B cell (primary cell): ENCODE measurements at regions of chr3 and their contacts with region 1.

Region 1: DNA sequence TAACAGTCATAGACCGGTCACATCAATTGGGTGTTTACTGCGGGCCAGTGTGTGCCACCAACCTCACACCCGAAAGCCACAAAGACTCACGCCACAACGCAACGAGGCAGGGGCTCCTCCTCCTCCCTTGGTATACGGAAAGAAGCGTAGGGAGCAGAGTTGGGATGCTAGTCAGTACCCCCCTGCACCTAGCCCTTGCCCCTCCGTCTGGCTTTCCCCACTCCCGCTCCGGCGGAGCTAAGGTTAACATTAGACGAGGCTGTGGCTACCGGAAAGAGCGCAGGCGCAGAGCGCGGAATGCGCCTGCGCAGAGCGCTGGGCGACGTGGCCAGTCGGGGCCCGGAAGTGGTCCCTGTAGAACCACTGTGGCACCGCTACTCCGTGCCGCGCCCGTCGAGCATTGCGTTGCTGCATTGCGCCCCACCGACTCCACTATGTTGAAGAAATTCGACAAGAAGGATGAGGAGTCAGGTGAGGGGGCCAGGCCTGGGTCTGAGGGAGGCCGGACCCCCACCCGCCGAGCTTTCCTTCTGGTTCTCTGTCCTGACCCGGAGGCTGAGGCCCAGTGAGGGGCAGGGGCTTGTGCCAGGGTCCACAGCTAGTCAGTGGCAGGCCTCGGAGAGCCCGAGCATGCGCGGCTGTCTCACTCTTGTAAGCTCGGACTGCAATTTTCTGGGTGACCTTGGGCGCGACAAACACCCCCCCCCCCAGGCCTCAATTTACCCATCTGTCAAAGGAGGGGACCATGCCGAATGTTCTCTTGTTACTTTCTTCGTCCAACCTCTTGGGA is at the start of gene COPG1:
- DNase-seq: peak; percentile 92
- ATAC-seq: peak; percentile 85
- H3K4me3 ChIP-seq: peak within 1 kb of the TSS; percentile 88 to 99 (median 95)
- H3K4me3 Mint-ChIP-seq: peak within 1 kb of the TSS; percentile 95
- H3K27ac ChIP-seq: peak within 1 kb of the TSS; percentile 64 to 79
- H3K27ac Mint-ChIP-seq: peak within 1 kb of the TSS; percentile 94
- H3K4me1 ChIP-seq: peaks cover 16 to 29% of the 10 kb centered on the region in 2 donors
- H3K4me1 Mint-ChIP-seq: peaks cover 26% of the 10 kb centered on the region
- H3K27me3 ChIP-seq: no peaks in the 10 kb centered on the region
- H3K27me3 Mint-ChIP-seq: no peaks in the 10 kb centered on the region
- CTCF ChIP-seq: no peak
- total RNA-seq, gene COPG1: 85.9 and 87.6 TPM in 2 replicates

Region 2: GRCh38 chr3:129003578-129004160 is 245.8 kb before region 1 on chr3:
- CTCF ChIA-PET with region 1: interaction called, 10 read pairs
- POLR2A ChIA-PET with region 1: no interaction called
- intact Hi-C with region 1: no loop called
- DNase-seq: peak; percentile 73
- ATAC-seq: peak; percentile 75
- H3K4me3 ChIP-seq: no peak overlapping the region
- H3K4me3 Mint-ChIP-seq: peak overlapping the region; percentile 80
- H3K27ac ChIP-seq: no peak overlapping the region
- H3K27ac Mint-ChIP-seq: no peak overlapping the region
- H3K4me1 ChIP-seq: peaks cover 32% of the 10 kb centered on the region in 2 donors
- H3K4me1 Mint-ChIP-seq: peaks cover 23% of the 10 kb centered on the region
- H3K27me3 ChIP-seq: peaks cover 0 to 63% (median 33%) of the 10 kb centered on the region in 4 experiments
- H3K27me3 Mint-ChIP-seq: peaks cover 57% of the 10 kb centered on the region
- CTCF ChIP-seq: peak; percentile 20

Region 3: GRCh38 chr3:129052675-129053074 is 196.8 kb before region 1 on chr3:
- CTCF ChIA-PET with region 1: interaction called, 294 read pairs
- POLR2A ChIA-PET with region 1: no interaction called
- intact Hi-C with region 1: loop called (anchors 1 kb)
- DNase-seq: no peak
- ATAC-seq: no peak
- H3K4me3 ChIP-seq: no peak overlapping the region
- H3K4me3 Mint-ChIP-seq: no peak overlapping the region
- H3K27ac ChIP-seq: no peak overlapping the region
- H3K27ac Mint-ChIP-seq: no peak overlapping the region
- H3K4me1 ChIP-seq: peaks cover 4 to 7% of the 10 kb centered on the region in 2 donors
- H3K4me1 Mint-ChIP-seq: peaks cover 7% of the 10 kb centered on the region
- H3K27me3 ChIP-seq: peaks cover 0 to 10% (median 2%) of the 10 kb centered on the region in 4 experiments
- H3K27me3 Mint-ChIP-seq: peaks cover 31% of the 10 kb centered on the region
- CTCF ChIP-seq: no peak

Region 4: DNA sequence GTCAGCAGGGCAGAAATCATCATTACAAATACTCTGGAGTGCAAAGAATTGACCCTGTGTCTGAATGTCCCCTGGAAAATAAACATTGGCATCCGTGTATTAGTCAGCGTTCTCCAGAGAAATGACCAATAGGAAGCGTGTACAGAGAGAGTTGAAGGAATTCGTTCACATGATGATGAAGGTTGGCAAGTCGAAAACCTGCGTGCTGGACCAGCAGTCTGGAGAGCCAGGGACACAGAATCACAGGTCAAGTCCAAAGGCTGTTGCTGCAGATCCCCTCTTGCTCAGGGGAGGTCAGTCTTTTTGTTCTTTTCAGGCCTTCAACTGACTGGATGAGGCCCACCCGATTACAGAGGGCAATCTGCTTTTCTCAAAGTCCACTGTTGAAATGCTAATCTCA is 172.2 kb before region 1 on chr3:
- CTCF ChIA-PET with region 1: no interaction called
- POLR2A ChIA-PET with region 1: no interaction called
- intact Hi-C with region 1: no loop called
- DNase-seq: no peak
- ATAC-seq: no peak
- H3K4me3 ChIP-seq: no peak overlapping the region
- H3K4me3 Mint-ChIP-seq: no peak overlapping the region
- H3K27ac ChIP-seq: no peak overlapping the region
- H3K27ac Mint-ChIP-seq: peak overlapping the region; percentile 32
- H3K4me1 ChIP-seq: no peaks in the 10 kb centered on the region
- H3K4me1 Mint-ChIP-seq: no peaks in the 10 kb centered on the region
- H3K27me3 ChIP-seq: no peaks in the 10 kb centered on the region
- H3K27me3 Mint-ChIP-seq: peaks cover 7% of the 10 kb centered on the region
- CTCF ChIP-seq: no peak

Region 5: DNA sequence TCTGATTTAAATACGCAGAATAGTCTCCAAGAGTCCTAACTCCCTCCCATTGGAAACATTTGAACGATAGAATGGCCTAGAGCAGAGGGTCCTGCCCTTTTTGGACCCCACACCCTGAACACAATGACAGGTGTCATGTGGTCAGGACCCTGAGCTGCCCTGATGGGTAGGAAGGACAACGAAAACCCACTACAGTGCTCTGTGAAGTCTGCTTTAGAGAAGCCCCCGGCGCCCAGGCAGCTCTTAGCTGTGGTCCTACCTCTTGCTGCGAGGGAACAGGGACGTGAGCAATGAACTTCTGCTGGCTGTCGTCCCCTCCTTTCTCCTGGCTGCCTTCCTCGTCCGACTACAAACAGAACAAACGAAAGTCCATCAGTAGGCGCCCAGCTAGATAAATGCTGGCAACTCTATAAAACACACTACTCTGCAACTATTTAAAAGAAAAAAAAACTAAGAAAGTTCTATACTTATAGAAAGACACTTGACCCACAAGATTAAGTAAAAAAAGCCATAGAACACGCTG is 119.1 kb before region 1 on chr3:
- CTCF ChIA-PET with region 1: no interaction called
- POLR2A ChIA-PET with region 1: no interaction called
- intact Hi-C with region 1: no loop called
- DNase-seq: no peak
- ATAC-seq: no peak
- H3K4me3 ChIP-seq: no peak overlapping the region
- H3K4me3 Mint-ChIP-seq: no peak overlapping the region
- H3K27ac ChIP-seq: no peak overlapping the region
- H3K27ac Mint-ChIP-seq: no peak overlapping the region
- H3K4me1 ChIP-seq: no peaks in the 10 kb centered on the region
- H3K4me1 Mint-ChIP-seq: no peaks in the 10 kb centered on the region
- H3K27me3 ChIP-seq: no peaks in the 10 kb centered on the region
- H3K27me3 Mint-ChIP-seq: no peaks in the 10 kb centered on the region
- CTCF ChIP-seq: no peak

Region 6: DNA sequence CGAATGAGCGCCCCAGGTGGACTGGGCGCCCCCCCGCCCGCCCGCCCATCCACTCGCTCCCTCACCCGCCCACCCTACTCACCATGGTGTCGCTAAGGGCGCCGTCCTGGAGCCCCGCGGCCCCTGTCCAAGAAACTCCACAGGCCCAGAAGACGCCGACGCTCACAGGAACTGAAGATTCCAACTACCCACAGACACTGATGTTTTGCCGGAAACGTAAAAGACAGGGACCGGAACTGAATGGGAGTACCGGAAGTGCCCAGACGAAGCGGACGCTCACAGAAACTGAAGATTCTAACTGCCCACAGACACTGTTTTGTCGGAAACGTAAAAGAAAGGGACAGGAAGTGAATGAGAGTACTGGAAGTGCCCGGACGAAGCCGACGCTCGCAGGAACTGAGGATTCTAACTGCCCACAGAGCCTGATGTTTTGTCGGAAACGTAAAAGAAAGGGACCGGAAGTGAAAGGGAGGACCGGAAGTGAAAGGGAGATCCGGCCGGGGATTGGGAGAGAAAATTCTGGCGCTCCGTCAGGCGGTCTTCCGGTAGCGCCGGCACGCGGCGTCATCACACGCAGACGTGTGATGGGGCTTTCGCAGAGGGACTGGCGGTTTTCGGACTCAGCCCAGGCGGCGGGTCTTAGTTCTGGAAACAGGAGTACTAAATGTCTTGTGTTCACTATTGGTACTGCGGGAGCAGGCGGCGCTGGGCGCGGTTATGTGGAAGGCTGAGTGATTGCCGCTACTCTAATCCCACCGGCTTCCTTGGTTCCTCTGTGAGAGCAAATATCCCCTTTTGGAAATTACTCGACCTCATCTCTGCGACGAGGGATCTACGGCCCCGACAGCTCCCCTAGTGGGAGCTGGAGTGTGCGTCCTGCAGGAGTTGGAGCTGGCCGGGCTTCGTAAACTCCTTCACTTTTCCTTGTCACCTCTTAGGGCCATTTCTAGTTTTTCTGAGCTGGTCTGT is 88.3 kb before region 1 on chr3 and contains the start of gene ISY1:
- CTCF ChIA-PET with region 1: interaction called, 70 read pairs
- POLR2A ChIA-PET with region 1: interaction called, 4 read pairs
- intact Hi-C with region 1: loop called (anchors 1 kb)
- DNase-seq: peak; percentile 97
- ATAC-seq: peak; percentile 85
- H3K4me3 ChIP-seq: peak within 1 kb of the TSS; percentile 73 to 99 (median 83)
- H3K4me3 Mint-ChIP-seq: peak within 1 kb of the TSS; percentile 100
- H3K27ac ChIP-seq: peak within 1 kb of the TSS; percentile 92 to 99
- H3K27ac Mint-ChIP-seq: peak within 1 kb of the TSS; percentile 100
- H3K4me1 ChIP-seq: peaks cover 18 to 24% of the 10 kb centered on the region in 2 donors
- H3K4me1 Mint-ChIP-seq: peaks cover 40% of the 10 kb centered on the region
- H3K27me3 ChIP-seq: no peaks in the 10 kb centered on the region
- H3K27me3 Mint-ChIP-seq: no peaks in the 10 kb centered on the region
- CTCF ChIP-seq: peak; percentile 83
- total RNA-seq, gene ISY1: 42.2 and 49.6 TPM in 2 replicates

Region 7: DNA sequence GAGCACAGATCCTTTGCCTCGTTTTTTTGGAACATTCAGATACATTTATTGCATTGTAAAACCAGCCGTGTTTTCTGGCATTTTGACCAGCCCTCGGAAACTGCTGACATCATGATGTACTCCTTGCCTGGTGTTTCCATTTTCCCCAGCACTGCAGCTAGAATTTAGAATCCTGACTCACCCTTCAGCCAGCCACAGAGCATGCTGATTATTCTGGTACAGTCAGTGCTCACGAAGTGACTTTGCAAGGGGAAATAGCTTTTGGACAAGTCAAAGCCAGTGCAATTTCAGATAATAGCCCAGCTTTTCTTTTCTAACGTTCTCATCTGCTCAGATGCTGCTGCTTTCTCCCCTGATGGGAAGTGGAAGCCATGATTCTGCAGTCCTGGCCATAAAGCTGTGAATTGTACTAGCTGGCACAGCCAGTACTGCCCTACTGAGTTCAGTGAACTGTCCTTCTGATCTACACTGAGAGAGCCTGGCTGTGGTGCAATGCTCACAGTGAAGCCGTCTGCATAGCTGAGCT is 53.7 kb before region 1 on chr3:
- CTCF ChIA-PET with region 1: interaction called, 14 read pairs
- POLR2A ChIA-PET with region 1: no interaction called
- intact Hi-C with region 1: no loop called
- DNase-seq: no peak
- ATAC-seq: no peak
- H3K4me3 ChIP-seq: no peak overlapping the region
- H3K4me3 Mint-ChIP-seq: no peak overlapping the region
- H3K27ac ChIP-seq: no peak overlapping the region
- H3K27ac Mint-ChIP-seq: no peak overlapping the region
- H3K4me1 ChIP-seq: peaks cover 13 to 14% of the 10 kb centered on the region in 2 donors
- H3K4me1 Mint-ChIP-seq: peaks cover 20% of the 10 kb centered on the region
- H3K27me3 ChIP-seq: no peaks in the 10 kb centered on the region
- H3K27me3 Mint-ChIP-seq: no peaks in the 10 kb centered on the region
- CTCF ChIP-seq: no peak

Region 8: DNA sequence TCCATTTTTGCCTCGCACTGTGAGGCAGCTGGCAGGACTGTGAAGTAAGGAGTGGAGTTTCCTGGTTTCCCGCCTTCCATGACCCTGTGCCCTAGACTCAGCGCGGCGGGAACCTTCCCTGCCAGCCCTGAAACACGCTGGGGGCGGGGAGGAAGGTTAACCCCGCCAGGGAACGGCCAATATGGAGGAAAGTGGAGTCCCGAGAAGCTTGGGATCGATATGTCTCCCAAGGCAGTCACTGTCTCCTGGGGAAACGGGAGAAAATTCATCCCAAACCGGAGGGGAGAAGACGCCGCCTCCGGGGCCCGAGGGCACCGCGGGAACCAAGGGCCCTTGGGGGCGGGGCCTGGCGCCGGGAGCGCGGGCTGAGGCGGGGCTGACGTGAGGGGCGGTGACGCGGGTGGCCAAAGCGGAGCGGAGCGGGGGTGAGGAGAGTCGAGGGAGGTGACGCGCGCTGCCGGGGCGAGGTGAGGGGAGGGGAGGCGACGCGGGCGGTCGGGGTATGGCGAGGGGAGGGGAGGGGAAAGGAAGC is 29.0 kb after region 1 on chr3 and contains the start of gene HMCES:
- CTCF ChIA-PET with region 1: interaction called, 14 read pairs
- POLR2A ChIA-PET with region 1: interaction called, 7 read pairs
- intact Hi-C with region 1: loop called (anchors 1 kb)
- DNase-seq: peak; percentile 94
- ATAC-seq: peak; percentile 72
- H3K4me3 ChIP-seq: peak within 1 kb of the TSS; percentile 79 to 92 (median 88)
- H3K4me3 Mint-ChIP-seq: peak within 1 kb of the TSS; percentile 95
- H3K27ac ChIP-seq: peak within 1 kb of the TSS; percentile 86
- H3K27ac Mint-ChIP-seq: peak within 1 kb of the TSS; percentile 91
- H3K4me1 ChIP-seq: peaks cover 67 to 73% of the 10 kb centered on the region in 2 donors
- H3K4me1 Mint-ChIP-seq: peaks cover 73% of the 10 kb centered on the region
- H3K27me3 ChIP-seq: peaks cover 0 to 4% (median 0%) of the 10 kb centered on the region in 4 experiments
- H3K27me3 Mint-ChIP-seq: peaks cover 5% of the 10 kb centered on the region
- CTCF ChIP-seq: no peak
- total RNA-seq, gene HMCES: 22.1 and 22.5 TPM in 2 replicates